PC-9 (cell line): ENCODE measurements at regions of chr1 and their contacts with region 1.

Region 1: DNA sequence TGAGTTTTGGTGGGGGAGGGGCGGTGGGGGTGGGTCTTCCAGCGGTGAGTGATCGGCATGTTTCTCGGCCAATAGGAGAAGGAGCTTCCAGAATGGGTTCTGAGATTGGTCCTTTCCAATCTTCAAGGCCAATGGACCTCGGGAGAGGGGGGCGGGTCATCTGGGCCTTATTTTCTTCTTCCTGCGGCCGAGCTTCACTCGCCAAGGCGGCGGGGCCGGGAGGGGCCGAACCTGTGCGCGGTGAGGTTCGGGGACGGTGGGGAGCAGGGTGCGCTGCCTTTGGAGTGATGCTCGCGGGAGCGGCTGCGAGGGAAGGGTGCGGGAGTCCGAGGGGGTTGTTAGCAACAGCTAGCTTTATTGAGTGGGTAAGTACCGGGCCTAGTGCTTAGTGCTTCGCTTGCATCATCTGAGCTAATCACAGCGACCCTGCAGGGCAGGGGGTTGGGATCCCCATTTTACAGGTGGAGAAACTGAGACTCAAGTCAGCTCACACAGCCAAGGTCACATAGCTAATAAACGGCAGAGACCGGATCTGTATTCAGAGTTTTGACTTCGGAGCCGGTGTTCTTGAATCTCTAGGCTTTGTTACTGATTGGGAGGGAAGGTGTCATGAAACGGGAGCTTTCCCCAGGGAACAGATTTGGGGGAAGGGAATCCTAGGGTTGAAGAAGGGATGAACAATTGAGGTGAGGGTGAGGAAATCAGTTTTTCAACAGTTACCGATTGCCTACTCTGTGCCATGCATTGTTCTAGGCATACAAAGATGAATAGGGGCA is 549 bp downstream of the KDM4A start:
- DNase-seq: peak; percentile 92 to 95
- H3K4me3 ChIP-seq: peak overlapping the region; percentile 86
- H3K27ac ChIP-seq: peak overlapping the region; percentile 70
- H3K4me1 ChIP-seq: peaks cover 25% of the 10 kb centered on the region
- H3K27me3 ChIP-seq: no peaks in the 10 kb centered on the region
- CTCF ChIP-seq: no peak

Region 2: DNA sequence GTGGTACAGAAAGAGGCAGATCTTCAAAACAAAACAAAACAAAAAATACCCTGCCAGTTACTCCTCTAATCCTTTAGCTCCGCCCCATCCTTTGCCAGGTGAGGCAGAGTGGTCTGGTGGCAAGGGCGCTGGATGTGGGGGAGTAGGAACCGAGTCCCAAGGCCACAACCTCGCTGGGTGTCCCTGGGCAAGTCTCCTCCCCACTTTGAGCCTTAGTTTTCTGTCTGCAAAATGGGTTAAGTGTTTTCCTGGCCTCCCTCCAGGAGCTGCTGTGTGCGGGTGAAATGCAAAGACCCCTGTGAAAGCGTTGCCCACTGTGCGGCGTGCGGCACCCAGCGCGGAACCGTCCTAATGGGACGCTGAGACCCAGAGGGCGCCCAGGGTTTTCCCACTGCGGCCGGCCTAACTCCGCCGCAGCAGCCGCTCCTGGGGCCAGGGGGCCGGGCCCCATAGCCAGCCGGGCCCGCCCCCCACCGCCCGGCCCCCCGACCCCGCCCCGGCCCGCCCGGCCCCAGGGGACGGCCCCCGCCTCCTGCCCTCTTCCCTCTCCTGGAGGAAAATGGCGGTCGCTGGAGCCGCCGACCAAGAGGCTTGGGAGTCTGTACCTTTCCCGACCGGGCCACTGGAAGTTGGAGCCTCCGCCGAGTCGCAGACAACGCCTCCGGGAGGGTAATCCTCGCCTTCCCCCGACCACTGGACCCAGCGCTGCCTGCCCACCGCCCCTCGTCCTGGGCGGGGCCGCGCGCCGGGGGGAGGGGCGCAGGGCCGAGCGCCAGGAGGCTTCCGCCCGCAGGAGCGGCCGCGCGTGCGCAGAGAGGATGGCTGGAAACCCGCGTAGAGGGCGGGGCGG is 833.7 kb before region 1 on chr1 and contains the starts of genes ERMAP and SVBP:
- CTCF ChIA-PET with region 1: no interaction called
- POLR2A ChIA-PET with region 1: no interaction called
- intact Hi-C with region 1: no loop called
- DNase-seq: peak; percentile 66 to 94
- H3K4me3 ChIP-seq: peak within 1 kb of the TSS; percentile 100
- H3K27ac ChIP-seq: peak within 1 kb of the TSS; percentile 97
- H3K4me1 ChIP-seq: peaks cover 21% of the 10 kb centered on the region
- H3K27me3 ChIP-seq: no peaks in the 10 kb centered on the region
- CTCF ChIP-seq: no peak
- total RNA-seq, gene ERMAP: 20.8 and 31.2 TPM in 2 replicates
- total RNA-seq, gene SVBP: 32.3 and 32.6 TPM in 2 replicates

Region 3: DNA sequence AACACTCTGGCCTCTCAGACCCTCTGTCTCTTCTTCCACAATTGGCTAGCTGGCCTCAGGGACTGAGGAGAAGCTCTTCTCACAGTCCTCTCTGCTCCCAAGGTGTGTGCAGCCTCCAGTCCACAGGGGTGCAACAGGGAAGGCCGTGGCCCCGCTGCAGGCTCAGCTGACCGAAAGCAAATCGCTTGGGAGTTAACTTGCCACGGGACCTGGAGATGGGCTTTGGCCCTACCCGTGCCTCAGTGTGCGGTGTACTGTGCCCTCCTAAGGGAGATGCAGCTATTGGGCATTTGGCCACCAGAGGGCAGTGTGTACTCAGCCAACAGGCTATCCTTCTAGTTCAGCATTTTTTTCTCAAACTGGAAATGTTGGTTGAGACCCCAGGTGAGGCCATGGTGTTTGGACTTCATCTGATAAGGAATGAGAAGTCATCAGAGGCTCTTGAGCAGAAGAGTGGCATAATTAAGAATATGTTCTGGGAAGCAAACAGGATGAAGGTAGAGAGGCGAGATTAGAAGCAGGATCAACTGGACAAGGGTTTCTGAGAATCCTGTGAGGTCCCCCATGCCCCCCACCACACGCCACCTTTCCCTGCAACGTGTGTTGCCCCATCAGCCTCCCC is 423.2 kb before region 1 on chr1:
- CTCF ChIA-PET with region 1: interaction called, 13 read pairs
- POLR2A ChIA-PET with region 1: interaction called, 7 read pairs
- intact Hi-C with region 1: no loop called
- DNase-seq: peak; percentile 73 to 88
- H3K4me3 ChIP-seq: no peak overlapping the region
- H3K27ac ChIP-seq: no peak overlapping the region
- H3K4me1 ChIP-seq: peaks cover 16% of the 10 kb centered on the region
- H3K27me3 ChIP-seq: no peaks in the 10 kb centered on the region
- CTCF ChIP-seq: peak; percentile 97

Region 4: GRCh38 chr1:43554444-43554992 is 96.0 kb before region 1 on chr1:
- CTCF ChIA-PET with region 1: interaction called, 3 read pairs
- POLR2A ChIA-PET with region 1: interaction called, 18 read pairs
- intact Hi-C with region 1: loop called (anchors 1 kb)
- DNase-seq: peak in 1 of 2 experiments; percentile 40
- H3K4me3 ChIP-seq: no peak overlapping the region
- H3K27ac ChIP-seq: 0 out of 2 replicates have a peak overlapping the region, but pooled peaks have one; percentile 13
- H3K4me1 ChIP-seq: peaks cover 79% of the 10 kb centered on the region
- H3K27me3 ChIP-seq: no peaks in the 10 kb centered on the region
- CTCF ChIP-seq: peak; percentile 68

Region 5: DNA sequence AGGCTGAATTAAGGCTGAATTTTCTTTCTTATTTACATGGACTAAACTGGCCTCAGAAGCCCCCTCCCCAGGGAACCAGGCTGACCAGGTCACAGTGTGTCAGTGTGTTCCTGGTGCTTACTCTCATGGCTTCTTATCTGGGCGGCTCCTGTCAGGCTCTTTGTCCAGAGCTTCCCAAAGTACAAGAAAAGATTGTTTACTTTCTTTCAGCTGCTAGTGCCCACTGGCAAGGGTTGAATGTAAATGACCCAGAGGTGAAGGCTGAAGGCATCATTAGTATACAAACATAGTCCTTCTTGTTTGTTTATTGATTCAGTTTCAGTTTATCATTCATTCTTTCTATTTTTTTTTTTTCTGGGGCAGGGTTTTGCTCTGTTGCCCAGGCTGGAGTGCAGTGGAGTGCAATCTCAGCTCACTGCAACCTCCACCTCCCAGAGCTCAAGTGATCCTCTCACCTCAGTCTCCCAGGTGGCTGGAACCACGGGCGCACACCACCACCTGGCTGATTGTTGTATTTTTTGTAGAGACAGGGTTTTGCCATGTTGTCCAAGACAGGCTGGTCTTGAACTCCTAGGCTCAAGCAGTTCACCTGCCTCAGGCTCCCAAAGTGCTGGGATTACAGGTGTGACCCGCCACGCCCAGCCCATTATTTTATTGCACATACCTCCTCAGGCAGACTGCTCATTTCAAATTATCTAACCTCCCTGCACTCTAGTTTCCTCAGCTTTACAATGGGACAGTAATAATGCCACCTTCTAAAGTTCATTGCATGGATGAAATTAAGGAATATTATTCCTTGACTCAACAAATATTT is 10.3 kb before region 1 on chr1:
- CTCF ChIA-PET with region 1: interaction called, 3 read pairs
- POLR2A ChIA-PET with region 1: interaction called, 18 read pairs
- intact Hi-C with region 1: no loop called
- DNase-seq: no peak
- H3K4me3 ChIP-seq: no peak overlapping the region
- H3K27ac ChIP-seq: no peak overlapping the region
- H3K4me1 ChIP-seq: peaks cover 45% of the 10 kb centered on the region
- H3K27me3 ChIP-seq: no peaks in the 10 kb centered on the region
- CTCF ChIP-seq: no peak

Region 6: GRCh38 chr1:43671626-43672330 is 21.3 kb after region 1 on chr1:
- CTCF ChIA-PET with region 1: no interaction called
- POLR2A ChIA-PET with region 1: no interaction called
- intact Hi-C with region 1: no loop called
- DNase-seq: no peak
- H3K4me3 ChIP-seq: no peak overlapping the region
- H3K27ac ChIP-seq: no peak overlapping the region
- H3K4me1 ChIP-seq: no peaks in the 10 kb centered on the region
- H3K27me3 ChIP-seq: no peaks in the 10 kb centered on the region
- CTCF ChIP-seq: no peak

Region 7: GRCh38 chr1:44029906-44030604 is 379.6 kb after region 1 on chr1:
- CTCF ChIA-PET with region 1: no interaction called
- POLR2A ChIA-PET with region 1: interaction called, 13 read pairs
- intact Hi-C with region 1: no loop called
- DNase-seq: peak; percentile 80 to 93
- H3K4me3 ChIP-seq: peak overlapping the region; percentile 97
- H3K27ac ChIP-seq: peak overlapping the region; percentile 91
- H3K4me1 ChIP-seq: peaks cover 57% of the 10 kb centered on the region
- H3K27me3 ChIP-seq: no peaks in the 10 kb centered on the region
- CTCF ChIP-seq: no peak

Region 8: GRCh38 chr1:45348716-45349677 is 1698.5 kb after region 1 on chr1:
- CTCF ChIA-PET with region 1: no interaction called
- POLR2A ChIA-PET with region 1: interaction called, 13 read pairs
- intact Hi-C with region 1: no loop called
- DNase-seq: peak in 1 of 2 experiments; percentile 50
- H3K4me3 ChIP-seq: no peak overlapping the region
- H3K27ac ChIP-seq: peak overlapping the region; percentile 4; the same call in 1 of the 2 replicates
- H3K4me1 ChIP-seq: peaks cover 22% of the 10 kb centered on the region
- H3K27me3 ChIP-seq: no peaks in the 10 kb centered on the region
- CTCF ChIP-seq: no peak